ENCODE measurements at regions of chr1 and their contacts with region 1.

Region 1: DNA sequence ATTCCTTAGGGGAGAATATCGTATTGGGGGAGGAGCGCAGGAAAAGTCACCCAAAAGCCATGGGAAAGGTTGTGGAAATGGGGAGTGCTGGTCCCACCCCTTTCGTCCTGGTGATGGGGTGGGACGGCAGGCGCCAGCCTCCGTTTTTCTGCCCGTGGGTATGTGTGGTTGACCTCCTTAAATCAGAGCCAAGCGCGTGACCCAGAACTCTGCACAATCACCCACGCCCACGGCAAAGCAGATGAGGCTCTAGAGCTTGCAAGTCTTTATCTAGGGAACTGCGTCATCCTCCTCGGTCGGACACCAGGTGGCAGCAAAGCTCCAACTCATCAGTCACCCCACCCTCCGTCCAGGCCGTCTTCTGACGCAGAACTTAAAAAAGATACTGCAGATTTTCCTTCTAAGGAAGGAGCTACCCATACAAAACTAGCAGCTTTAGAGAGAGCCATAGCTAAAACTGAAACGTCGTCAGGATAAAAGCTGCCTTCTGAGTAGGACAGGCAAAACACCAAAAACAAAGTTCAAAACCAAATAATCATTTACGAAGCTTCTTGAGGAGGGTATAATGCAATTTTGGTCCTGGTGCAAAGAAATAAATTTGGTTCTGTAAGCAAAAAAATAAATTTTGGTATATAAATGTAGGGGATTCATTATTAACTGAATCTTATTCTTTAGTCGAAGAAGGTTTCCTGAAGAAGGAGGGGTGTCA is 62.0 kb downstream of the TBX19 start:
- DNase-seq: peak; percentile 92
- H3K4me3 Mint-ChIP-seq: no peak overlapping the region
- H3K27ac Mint-ChIP-seq: peak overlapping the region; percentile 42
- H3K4me1 Mint-ChIP-seq: peaks cover 35% of the 10 kb centered on the region
- H3K27me3 Mint-ChIP-seq: no peaks in the 10 kb centered on the region

Region 2: GRCh38 chr1:168287237-168287664 is 55.5 kb before region 1 on chr1:
- CTCF ChIA-PET with region 1: no interaction called
- POLR2A ChIA-PET with region 1: no interaction called
- intact Hi-C with region 1: no loop called
- DNase-seq: no peak
- H3K4me3 Mint-ChIP-seq: no peak overlapping the region
- H3K27ac Mint-ChIP-seq: no peak overlapping the region
- H3K4me1 Mint-ChIP-seq: peaks cover 16% of the 10 kb centered on the region
- H3K27me3 Mint-ChIP-seq: no peaks in the 10 kb centered on the region

Region 3: GRCh38 chr1:168360151-168361021 is 17.7 kb after region 1 on chr1:
- CTCF ChIA-PET with region 1: interaction called, 126 read pairs
- POLR2A ChIA-PET with region 1: interaction called, 3 read pairs
- intact Hi-C with region 1: loop called (anchors 1 kb)
- DNase-seq: peak; percentile 73
- H3K4me3 Mint-ChIP-seq: no peak overlapping the region
- H3K27ac Mint-ChIP-seq: peak overlapping the region; percentile 39
- H3K4me1 Mint-ChIP-seq: peaks cover 38% of the 10 kb centered on the region
- H3K27me3 Mint-ChIP-seq: no peaks in the 10 kb centered on the region

Region 4: GRCh38 chr1:168396940-168397698 is 54.4 kb after region 1 on chr1:
- CTCF ChIA-PET with region 1: interaction called, 10 read pairs
- POLR2A ChIA-PET with region 1: no interaction called
- intact Hi-C with region 1: no loop called
- DNase-seq: no peak
- H3K4me3 Mint-ChIP-seq: no peak overlapping the region
- H3K27ac Mint-ChIP-seq: no peak overlapping the region
- H3K4me1 Mint-ChIP-seq: peaks cover 22% of the 10 kb centered on the region
- H3K27me3 Mint-ChIP-seq: peaks cover 2% of the 10 kb centered on the region

Region 5: GRCh38 chr1:168439456-168440375 is 97.0 kb after region 1 on chr1:
- CTCF ChIA-PET with region 1: interaction called, 124 read pairs
- POLR2A ChIA-PET with region 1: interaction called, 7 read pairs
- intact Hi-C with region 1: loop called (anchors 1 kb)
- DNase-seq: peak; percentile 86
- H3K4me3 Mint-ChIP-seq: peak overlapping the region; percentile 46
- H3K27ac Mint-ChIP-seq: no peak overlapping the region
- H3K4me1 Mint-ChIP-seq: peaks cover 31% of the 10 kb centered on the region
- H3K27me3 Mint-ChIP-seq: no peaks in the 10 kb centered on the region

Region 6: GRCh38 chr1:168603501-168604110 is 260.9 kb after region 1 on chr1:
- CTCF ChIA-PET with region 1: interaction called, 40 read pairs
- POLR2A ChIA-PET with region 1: no interaction called
- intact Hi-C with region 1: no loop called
- DNase-seq: peak; percentile 77
- H3K4me3 Mint-ChIP-seq: no peak overlapping the region
- H3K27ac Mint-ChIP-seq: no peak overlapping the region
- H3K4me1 Mint-ChIP-seq: no peaks in the 10 kb centered on the region
- H3K27me3 Mint-ChIP-seq: peaks cover 7% of the 10 kb centered on the region

Region 7: DNA sequence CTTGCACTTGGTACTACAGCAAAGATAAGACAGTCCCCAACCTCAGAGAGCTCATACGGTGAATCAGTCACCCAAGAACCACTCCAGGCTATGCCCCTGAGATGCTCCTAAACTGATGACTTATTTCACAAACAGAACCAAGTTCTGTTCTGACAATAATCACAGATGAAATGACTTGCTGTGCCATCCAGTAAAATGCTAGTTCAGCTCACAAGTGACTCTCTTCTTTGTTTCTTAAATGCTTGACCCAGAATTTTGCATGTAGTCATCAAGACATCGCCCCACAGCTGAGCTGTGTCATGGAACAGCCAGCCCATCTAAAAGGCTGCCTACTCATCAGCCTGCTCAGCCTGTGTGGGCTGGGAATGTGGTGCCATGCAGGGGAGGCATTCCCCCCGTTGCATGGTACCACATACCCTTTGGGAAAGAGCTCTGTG is 1149.1 kb after region 1 on chr1:
- CTCF ChIA-PET with region 1: no interaction called
- POLR2A ChIA-PET with region 1: no interaction called
- intact Hi-C with region 1: loop called (anchors 10 kb)
- DNase-seq: peak; percentile 82
- H3K4me3 Mint-ChIP-seq: no peak overlapping the region
- H3K27ac Mint-ChIP-seq: peak overlapping the region; percentile 47
- H3K4me1 Mint-ChIP-seq: peaks cover 56% of the 10 kb centered on the region
- H3K27me3 Mint-ChIP-seq: peaks cover 3% of the 10 kb centered on the region

Measured in activated CD4-positive, alpha-beta memory T cell treated with anti-CD3 and anti-CD28 coated beads for 36 hours (primary cell).